HAP-1 (cell line): ENCODE measurements at regions of chr7 and their contacts with region 1.

Region 1: DNA sequence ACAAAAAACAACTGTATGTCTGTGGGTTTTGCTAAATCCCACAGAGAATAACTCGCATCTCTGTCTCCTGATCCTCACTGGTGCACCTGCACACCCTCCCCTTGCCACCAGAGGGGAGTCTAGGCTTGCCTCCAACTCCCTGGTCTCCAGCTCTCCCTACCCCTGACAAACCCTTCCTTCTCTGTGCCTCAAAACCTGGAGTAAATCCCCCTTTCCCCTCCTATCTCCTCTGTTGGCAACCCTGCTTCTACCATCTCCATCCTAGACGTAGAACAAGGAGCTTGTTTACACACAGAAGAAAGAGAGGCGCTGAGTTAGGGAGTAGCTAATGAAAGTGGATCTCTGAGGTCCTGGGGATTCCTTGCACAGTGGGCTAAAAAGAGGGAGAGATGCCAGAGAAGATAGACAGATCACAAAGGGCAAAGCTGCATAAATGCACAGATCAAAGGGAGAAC is 6.0 kb downstream of the MBLAC1 start:
- DNase-seq: peak; percentile 73 to 82
- H3K4me3 ChIP-seq: no peak overlapping the region
- H3K4me1 ChIP-seq: peaks cover 16% of the 10 kb centered on the region
- H3K27me3 ChIP-seq: no peaks in the 10 kb centered on the region

Region 2: DNA sequence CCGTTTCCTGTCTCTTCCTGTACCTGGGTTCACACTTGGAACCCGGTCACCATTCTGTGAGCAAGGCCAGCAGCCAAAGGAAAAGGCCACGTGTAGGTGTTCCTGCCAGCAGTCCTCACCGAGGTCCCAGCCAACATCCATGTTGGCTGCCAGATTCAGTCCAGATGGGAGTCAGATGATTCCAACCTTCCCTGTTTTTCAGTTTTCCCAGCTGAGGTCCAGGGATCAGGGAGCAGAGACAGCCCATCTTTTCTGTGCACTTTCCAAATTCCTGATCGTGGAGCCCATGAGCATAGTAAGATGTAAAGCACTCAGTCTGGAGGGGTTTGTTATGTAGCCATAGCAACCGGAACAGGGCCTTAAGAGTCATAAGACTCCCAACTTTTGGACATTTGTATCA is 83.2 kb after region 1 on chr7:
- in situ Hi-C with region 1: loop called (anchors 5 kb)
- DNase-seq: no peak
- H3K4me3 ChIP-seq: no peak overlapping the region
- H3K4me1 ChIP-seq: no peaks in the 10 kb centered on the region
- H3K27me3 ChIP-seq: no peaks in the 10 kb centered on the region

Region 3: DNA sequence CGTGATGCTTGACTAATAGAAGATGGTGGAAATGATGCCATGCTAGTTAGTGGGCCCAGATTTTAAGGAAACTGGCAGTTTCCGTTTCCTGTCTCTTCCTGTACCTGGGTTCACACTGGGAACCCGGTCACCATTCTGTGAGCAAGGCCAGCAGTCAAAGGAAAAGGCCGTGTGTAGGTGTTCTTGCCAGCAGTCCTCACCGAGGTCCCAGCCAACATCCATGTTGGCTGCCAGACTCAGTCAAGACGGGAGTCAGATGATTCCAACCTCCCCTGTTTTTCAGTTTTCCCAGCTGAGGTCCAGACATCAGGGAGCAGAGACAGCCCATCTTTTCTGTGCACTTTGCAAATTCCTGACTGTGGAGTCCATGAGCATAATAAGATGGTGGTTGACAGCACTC is 210.0 kb after region 1 on chr7:
- in situ Hi-C with region 1: loop called (anchors 10 kb)
- DNase-seq: no peak
- H3K4me3 ChIP-seq: no peak overlapping the region
- H3K4me1 ChIP-seq: no peaks in the 10 kb centered on the region
- H3K27me3 ChIP-seq: no peaks in the 10 kb centered on the region

Region 4: DNA sequence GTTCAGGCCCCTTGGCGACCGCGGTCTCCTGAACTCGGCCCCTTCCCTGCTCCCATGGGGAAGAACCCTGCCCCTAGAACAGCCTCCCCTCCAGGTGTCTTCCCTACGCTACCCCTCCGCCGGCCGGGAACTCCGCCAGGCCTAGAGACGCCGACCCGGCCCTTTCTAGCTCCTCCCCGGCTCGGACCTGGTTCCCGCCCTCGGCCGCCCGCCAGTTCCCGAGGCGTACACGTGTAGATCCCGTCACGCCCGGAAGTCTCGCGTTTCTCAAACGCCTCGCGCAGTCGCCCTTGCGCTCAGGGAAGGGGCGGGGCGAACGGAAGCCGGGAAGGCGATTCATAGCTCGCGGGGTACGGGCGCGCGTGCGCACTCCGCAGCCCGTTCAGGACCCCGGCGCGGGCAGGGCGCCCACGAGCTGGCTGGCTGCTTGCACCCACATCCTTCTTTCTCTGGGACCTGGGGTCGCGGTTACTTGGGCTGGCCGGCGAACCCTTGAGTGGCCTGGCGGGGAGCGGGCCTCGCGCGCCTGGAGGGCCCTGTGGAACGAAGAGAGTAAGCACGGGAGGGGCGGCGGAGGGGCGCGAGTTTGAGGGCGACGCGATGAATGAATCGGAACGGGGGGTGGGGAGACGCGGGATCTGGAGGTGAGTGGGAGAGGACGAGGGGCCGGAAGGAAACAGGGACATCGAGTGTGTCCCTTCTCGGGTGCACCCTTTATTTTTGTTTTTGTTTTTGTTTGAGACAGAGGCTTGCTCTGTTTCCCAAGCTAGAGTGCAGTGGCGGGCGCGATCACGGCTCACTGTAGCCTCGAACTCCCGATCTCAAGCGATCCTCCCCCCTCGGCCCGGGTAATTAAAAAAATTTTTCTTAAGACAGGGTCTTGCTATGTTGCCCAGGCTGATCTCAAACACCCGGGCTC is 573.3 kb after region 1 on chr7 and contains the start of gene POP7:
- in situ Hi-C with region 1: no loop called
- DNase-seq: peak; percentile 90 to 100
- H3K4me3 ChIP-seq: peak within 1 kb of the TSS; percentile 99
- H3K4me1 ChIP-seq: peaks cover 10% of the 10 kb centered on the region
- H3K27me3 ChIP-seq: no peaks in the 10 kb centered on the region; the same call in 1 of the 2 replicates

Region 5: DNA sequence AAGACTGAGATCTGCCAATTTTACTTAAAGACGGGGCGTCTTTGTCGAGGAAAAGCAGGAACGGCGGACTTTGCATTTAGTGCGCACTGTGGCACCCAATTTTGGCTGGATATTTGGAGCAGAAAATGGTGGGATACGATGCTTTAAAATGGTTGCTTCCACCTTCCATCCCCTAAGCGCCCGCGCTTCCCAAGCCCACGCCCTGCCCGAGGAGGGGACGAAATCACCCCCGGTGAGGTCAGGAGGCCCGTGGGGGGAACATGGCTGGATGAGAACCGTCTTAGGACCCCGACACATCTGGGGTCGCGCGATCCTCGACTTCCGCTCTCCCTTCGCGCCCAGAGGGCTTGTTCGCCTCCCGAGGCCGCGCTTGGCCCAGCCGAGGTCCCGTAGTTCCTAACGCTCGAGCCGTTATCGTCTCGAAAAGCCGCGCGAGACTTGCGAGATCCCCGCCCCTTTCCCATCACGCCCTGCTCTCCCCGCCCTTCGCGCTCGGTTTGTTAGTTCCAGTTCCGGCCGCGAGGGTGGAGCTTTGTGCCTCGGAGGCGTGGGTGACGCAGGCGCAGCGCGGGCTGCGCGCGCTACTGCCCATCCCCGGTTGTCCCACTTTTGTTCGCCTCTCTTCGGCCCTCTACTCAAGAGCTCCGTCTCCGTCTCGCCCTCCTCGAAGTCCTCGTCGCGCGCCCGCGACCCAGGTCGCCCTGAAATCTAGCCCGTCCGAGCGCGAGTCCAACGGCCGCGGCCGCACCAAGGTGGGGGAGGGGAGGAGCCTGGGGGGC is 742.0 kb after region 1 on chr7 and contains the start of gene SRRT:
- in situ Hi-C with region 1: no loop called
- DNase-seq: peak; percentile 97 to 99
- H3K4me3 ChIP-seq: peak within 1 kb of the TSS; percentile 97
- H3K4me1 ChIP-seq: peaks cover 8% of the 10 kb centered on the region
- H3K27me3 ChIP-seq: no peaks in the 10 kb centered on the region